ENCODE measurements at regions of chr18 and their contacts with region 1.

Region 1: GRCh38 chr18:22102953-22103646 is 66.3 kb upstream of the GATA6 start:
- DNase-seq: no peak
- H3K4me3 ChIP-seq: no peak overlapping the region
- H3K27ac ChIP-seq: no peak overlapping the region
- H3K4me1 ChIP-seq: no peaks in the 10 kb centered on the region
- H3K27me3 ChIP-seq: no peaks in the 10 kb centered on the region
- CTCF ChIP-seq: no peak
- POLR2A ChIP-seq: no peak

Region 2: DNA sequence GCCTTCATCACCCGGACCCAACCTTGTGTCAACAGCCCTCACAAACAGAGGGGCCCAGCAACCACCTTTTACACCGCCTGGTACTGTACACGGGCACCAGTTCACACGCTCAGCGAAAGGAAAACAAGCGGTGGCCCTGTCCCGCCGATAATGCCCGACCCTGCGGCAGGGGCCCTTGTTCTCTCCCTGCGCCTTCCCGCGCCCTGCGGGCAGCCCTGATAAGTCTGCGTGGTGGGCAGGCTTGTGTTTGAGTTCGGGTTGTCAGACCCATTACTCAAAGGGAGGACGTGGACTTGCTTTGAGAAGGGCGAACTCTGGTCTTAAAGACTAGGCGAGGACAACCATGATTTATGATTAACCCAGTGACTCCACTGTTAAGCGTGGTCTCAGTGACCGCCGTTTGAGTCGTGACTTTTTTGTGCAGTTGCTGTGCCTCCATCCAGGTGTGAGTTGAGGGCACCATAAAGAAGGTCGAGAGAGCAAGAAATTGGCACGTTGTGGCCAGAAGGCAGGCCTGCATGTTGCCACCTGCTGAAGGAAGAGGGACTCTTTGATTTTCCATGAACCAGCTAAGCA is 101.1 kb before region 1 on chr18:
- intact Hi-C with region 1: loop called (anchors 5 kb)
- DNase-seq: no peak
- H3K4me3 ChIP-seq: no peak overlapping the region
- H3K27ac ChIP-seq: no peak overlapping the region
- H3K4me1 ChIP-seq: no peaks in the 10 kb centered on the region
- H3K27me3 ChIP-seq: no peaks in the 10 kb centered on the region
- CTCF ChIP-seq: no peak
- POLR2A ChIP-seq: no peak

Measured in breast epithelium (tissue), 4 donors.